H1 (cell line): ENCODE measurements at regions of chr12 and their contacts with region 1.

Region 1: GRCh38 chr12:9347328-9348127 is 139.3 kb upstream of the PZP start:
- DNase-seq: no peak
- H3K4me3 ChIP-seq: no peak overlapping the region
- H3K27ac ChIP-seq: no peak overlapping the region
- H3K4me1 ChIP-seq: no peaks in the 10 kb centered on the region
- H3K27me3 ChIP-seq: no peaks in the 10 kb centered on the region
- CTCF ChIP-seq: no peak
- EP300 ChIP-seq: no peak
- POLR2A ChIP-seq: no peak
- RAD21 ChIP-seq: no peak

Region 2: GRCh38 chr12:9372202-9372601 is 24.7 kb after region 1 on chr12:
- CTCF ChIA-PET with region 1: interaction called, 23 read pairs
- POLR2A ChIA-PET with region 1: no interaction called
- DNase-seq: no peak
- H3K4me3 ChIP-seq: no peak overlapping the region
- H3K27ac ChIP-seq: no peak overlapping the region
- H3K4me1 ChIP-seq: no peaks in the 10 kb centered on the region
- H3K27me3 ChIP-seq: no peaks in the 10 kb centered on the region
- CTCF ChIP-seq: peak in 2 of 3 experiments; percentile 26 to 59; a peak in 2 of 4 replicates
- EP300 ChIP-seq: no peak
- POLR2A ChIP-seq: no peak
- RAD21 ChIP-seq: peak; percentile 54